ENCODE measurements at regions of chr10 and their contacts with region 1.

Region 1: DNA sequence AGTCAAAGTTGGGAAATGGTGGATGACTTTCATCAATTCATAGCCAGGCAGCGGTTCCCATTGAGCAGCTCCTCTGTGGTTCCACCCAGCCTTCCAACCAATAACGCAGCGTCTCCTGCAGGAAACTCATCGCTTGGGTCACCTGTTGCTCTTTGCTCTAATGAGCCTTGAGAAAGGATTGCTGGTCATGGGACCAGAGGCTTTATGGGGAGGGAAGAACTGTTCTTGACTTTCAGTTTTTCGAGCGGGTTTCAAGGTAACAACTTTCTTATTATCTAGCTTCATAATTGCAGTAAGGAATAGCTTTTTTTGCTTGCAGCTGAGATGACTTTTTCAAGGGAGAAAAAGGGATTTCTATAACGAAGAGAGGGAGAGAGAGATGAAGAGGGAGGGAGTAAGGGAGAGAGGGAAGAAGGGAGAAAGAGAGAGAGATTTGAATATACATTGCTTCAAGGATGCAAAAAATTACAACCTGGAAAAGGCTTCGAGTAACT is 405 bp upstream of the ENTPD1 start:
- DNase-seq: peak; percentile 90
- ATAC-seq: peak; percentile 48
- H3K4me3 ChIP-seq: peak overlapping the region; percentile 94
- H3K27ac ChIP-seq: peak overlapping the region; percentile 96
- H3K4me1 ChIP-seq: peaks cover 15% of the 10 kb centered on the region; the same call in 1 of the 2 replicates
- H3K27me3 ChIP-seq: no peaks in the 10 kb centered on the region
- CTCF ChIP-seq: no peak; a peak in 1 of 6 replicates
- EP300 ChIP-seq: peak in 1 of 2 experiments; percentile 56; a peak in 1 of 4 replicates
- POLR2A ChIP-seq: peak; percentile 23; the same call in 1 of the 2 replicates
- RAD21 ChIP-seq: no peak

Region 2: DNA sequence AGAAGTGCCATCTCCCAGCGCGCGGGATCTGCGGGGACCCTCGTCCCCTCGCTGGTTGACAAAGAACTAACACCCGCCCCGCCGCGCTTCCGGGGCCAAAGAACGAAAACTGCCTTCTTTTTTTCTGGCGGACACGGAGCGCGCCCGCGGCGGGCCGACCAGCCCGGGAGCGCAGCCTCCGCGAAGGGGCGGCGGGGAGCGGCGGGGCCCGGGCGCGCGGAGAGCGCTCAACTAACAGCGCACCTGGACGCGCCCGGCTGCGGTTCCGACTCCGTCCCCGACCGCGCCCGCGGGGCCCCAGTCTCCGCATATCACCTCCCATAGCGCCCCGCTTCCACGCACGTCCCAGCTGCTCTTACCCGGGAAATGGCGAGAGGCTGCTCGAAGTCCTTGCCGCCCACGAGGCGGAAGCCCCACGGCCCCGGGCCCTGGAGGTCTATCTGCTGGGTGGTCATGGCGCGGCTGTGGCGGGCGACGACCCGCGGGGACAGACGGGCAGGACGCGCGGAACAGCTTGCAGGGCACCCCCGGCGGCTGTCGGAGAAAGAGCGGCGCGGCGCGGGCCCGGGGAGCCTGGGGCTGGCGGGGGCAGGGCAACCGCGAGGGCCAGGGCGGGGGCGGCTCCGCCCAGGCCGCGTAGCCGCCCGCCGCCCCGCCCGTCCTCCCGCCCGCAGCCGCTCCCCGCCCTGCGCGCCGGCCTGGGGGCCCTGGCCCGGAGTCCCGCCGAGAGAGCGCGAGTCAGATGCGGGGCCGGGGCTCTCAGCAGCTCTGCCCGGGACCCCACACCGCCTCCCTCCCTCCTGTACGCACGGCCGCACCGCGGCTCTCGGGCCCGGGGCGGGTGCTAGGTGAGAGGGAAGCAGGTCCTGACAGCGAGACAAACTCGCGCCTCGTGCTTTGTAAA is 464.8 kb before region 1 on chr10 and contains the start of gene PDLIM1:
- CTCF ChIA-PET with region 1: no interaction called
- POLR2A ChIA-PET with region 1: interaction called, 3 read pairs
- RAD21 ChIA-PET with region 1: no interaction called
- SMC1A ChIA-PET with region 1: no interaction called
- in situ Hi-C with region 1: loop called (anchors 10 kb)
- intact Hi-C with region 1: loop called (anchors 10 kb)
- DNase-seq: no peak
- ATAC-seq: peak; percentile 55
- H3K4me3 ChIP-seq: peak within 1 kb of the TSS; percentile 97
- H3K27ac ChIP-seq: peak within 1 kb of the TSS; percentile 98
- H3K4me1 ChIP-seq: peaks cover 47% of the 10 kb centered on the region
- H3K27me3 ChIP-seq: no peaks in the 10 kb centered on the region
- CTCF ChIP-seq: peak; percentile 21 to 30 (median 27); a peak in 5 of 6 replicates
- EP300 ChIP-seq: no peak
- POLR2A ChIP-seq: peak; percentile 96
- RAD21 ChIP-seq: no peak
- polyA plus RNA-seq, gene PDLIM1: 133 to 338 TPM

Region 3: DNA sequence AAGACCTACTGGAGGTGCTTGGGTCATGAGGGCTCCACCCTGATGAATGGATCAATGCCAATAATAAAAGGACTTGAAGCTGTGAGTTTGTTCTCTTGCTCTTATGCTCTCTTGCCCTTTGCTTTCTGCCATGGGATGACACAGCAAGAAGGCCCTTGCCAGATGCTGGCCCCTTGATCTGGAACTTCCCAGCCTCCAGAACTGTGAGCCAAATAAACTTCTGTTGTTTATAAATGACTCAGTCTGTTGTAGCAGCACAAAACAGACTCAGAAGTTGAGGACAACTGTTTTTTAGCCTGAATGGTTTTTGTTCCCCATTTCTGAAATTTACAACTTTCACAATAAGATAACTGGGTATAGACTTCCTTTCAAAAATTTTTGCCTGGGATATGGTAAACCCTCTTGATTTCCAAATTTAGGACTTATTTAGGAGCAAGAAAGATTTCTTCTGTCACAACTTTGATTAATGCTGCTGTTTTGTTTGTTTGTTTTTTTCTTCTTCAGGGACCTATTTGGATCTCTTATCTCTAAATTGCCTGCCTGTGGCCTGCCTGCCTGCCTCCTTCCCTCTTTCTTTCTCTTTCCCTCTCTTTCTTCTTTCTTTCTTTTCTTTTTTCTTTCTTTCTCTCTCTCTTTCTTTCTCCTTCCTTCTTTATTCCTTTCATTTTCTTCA is 12.5 kb after region 1 on chr10:
- CTCF ChIA-PET with region 1: no interaction called
- POLR2A ChIA-PET with region 1: interaction called, 7 read pairs
- RAD21 ChIA-PET with region 1: interaction called, 18 read pairs
- SMC1A ChIA-PET with region 1: interaction called, 4 read pairs
- in situ Hi-C with region 1: no loop called
- intact Hi-C with region 1: no loop called
- DNase-seq: no peak
- ATAC-seq: peak; percentile 87
- H3K4me3 ChIP-seq: peak overlapping the region; percentile 19; the same call in 1 of the 2 replicates
- H3K27ac ChIP-seq: peak overlapping the region; percentile 94
- H3K4me1 ChIP-seq: peaks cover 34% of the 10 kb centered on the region
- H3K27me3 ChIP-seq: no peaks in the 10 kb centered on the region
- CTCF ChIP-seq: no peak
- EP300 ChIP-seq: peak; percentile 33 to 73; a peak in 3 of 4 replicates
- POLR2A ChIP-seq: no peak
- RAD21 ChIP-seq: peak; percentile 28; the same call in 1 of the 2 replicates

Region 4: DNA sequence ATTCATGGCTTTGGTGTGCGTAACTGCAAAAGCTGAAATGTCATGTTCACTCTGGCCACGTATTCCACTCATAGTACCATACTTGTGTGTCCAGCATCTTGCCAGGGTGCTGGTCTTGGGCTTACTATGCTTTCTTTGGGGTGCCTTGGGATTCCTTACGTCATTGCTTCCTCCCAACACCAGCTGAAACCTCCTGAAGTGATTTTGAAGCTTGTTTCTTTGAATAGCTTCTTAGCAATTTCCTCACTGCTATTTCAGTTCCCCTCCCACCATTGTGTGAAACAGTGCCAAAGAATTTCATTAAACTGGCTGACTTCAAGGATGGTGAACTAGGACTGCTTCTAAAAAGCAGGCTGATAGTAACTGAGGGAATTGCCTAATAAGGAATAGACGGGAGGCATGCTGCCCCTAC is 37.3 kb after region 1 on chr10:
- CTCF ChIA-PET with region 1: interaction called, 23 read pairs
- POLR2A ChIA-PET with region 1: interaction called, 265 read pairs
- RAD21 ChIA-PET with region 1: interaction called, 270 read pairs
- SMC1A ChIA-PET with region 1: interaction called, 547 read pairs
- in situ Hi-C with region 1: no loop called
- intact Hi-C with region 1: loop called (anchors 1 kb)
- DNase-seq: peak; percentile 77
- ATAC-seq: peak; percentile 31
- H3K4me3 ChIP-seq: peak overlapping the region; percentile 18; the same call in 1 of the 2 replicates
- H3K27ac ChIP-seq: peak overlapping the region; percentile 93
- H3K4me1 ChIP-seq: peaks cover 64% of the 10 kb centered on the region
- H3K27me3 ChIP-seq: no peaks in the 10 kb centered on the region
- CTCF ChIP-seq: no peak
- EP300 ChIP-seq: peak; percentile 54; a peak in 1 of 4 replicates
- POLR2A ChIP-seq: no peak
- RAD21 ChIP-seq: 0 out of 2 replicates have a peak, but pooled peaks have one; percentile 4

Region 5: DNA sequence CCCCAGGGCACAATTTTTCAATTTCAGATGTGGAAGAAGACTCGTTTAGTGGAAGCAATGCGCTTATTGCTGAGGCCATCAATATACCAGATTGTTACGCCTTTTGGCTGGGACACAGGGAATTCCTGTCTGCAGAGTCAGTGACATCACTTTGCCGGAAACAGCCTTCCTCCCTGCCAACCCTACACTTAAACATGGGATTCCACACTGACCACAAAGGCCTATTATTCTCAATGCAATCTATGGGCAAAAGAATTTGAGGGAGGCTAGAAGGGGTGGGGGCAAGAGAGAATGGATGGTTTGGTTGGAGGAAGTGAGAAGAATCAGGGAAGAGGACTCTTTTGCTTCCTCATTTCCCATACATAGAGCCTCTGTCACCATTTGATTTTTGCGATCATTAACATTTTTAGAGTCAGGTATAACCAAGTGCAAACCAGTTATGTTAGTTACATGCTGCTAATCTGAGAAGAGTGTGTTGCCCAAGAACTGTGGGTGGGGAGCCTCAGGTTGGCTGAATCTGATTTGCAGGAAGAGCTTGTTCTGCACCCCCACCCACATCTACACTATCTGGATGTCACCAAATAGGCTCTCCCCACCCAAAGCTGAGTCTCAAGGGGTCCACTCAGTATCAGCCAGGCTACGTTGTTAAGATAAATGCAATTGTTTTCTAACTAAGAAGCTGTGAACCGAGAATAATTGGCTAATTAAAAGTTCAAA is 58.6 kb after region 1 on chr10:
- CTCF ChIA-PET with region 1: interaction called, 8 read pairs
- POLR2A ChIA-PET with region 1: interaction called, 105 read pairs
- RAD21 ChIA-PET with region 1: interaction called, 74 read pairs
- SMC1A ChIA-PET with region 1: interaction called, 102 read pairs
- in situ Hi-C with region 1: no loop called
- intact Hi-C with region 1: no loop called
- DNase-seq: no peak
- ATAC-seq: peak; percentile 6; the same call in 1 of the 3 replicates
- H3K4me3 ChIP-seq: no peak overlapping the region
- H3K27ac ChIP-seq: peak overlapping the region; percentile 26; the same call in 1 of the 2 replicates
- H3K4me1 ChIP-seq: peaks cover 44% of the 10 kb centered on the region
- H3K27me3 ChIP-seq: no peaks in the 10 kb centered on the region
- CTCF ChIP-seq: no peak
- EP300 ChIP-seq: no peak
- POLR2A ChIP-seq: peak; percentile 30; the same call in 1 of the 2 replicates
- RAD21 ChIP-seq: no peak

Region 6: DNA sequence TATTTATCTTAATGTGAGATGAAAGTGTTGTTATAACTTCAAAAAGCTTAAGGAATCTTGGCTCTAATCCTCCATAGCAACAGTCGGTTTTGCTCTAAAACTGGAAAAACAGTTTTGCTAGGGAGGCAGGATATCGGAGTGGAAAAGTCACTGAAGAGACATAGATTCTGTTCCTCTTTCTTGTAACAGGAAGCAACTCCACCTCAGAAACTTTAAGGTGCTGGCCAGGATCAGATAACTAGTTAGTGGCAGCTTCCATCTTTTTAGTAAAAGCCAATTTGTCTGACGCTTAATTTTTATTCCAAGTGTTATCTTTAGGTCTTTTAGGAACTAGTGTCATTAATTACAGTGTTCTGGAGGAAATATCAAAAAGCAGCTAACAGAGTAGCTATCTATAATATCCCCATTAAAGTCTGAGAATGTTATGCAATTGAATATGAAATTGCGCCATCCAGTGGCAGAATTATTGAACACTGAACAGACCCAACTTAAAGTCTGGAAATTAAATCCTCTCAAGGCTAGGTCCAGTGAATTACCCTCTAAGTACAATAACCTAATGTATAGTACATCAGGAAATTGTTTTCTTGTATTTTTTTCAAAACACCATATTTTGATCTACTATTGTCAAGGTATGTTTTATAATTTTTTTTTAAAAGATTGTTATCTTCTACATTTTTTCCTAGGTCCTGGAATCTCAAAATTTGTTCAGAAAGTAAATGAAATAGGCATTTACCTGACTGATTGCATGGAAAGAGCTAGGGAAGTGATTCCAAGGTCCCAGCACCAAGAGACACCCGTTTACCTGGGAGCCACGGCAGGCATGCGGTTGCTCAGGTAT is 86.3 kb after region 1 on chr10:
- CTCF ChIA-PET with region 1: interaction called, 187 read pairs
- POLR2A ChIA-PET with region 1: interaction called, 313 read pairs
- RAD21 ChIA-PET with region 1: interaction called, 374 read pairs
- SMC1A ChIA-PET with region 1: interaction called, 413 read pairs
- in situ Hi-C with region 1: loop called (anchors 10 kb)
- intact Hi-C with region 1: loop called (anchors 1 kb)
- DNase-seq: no peak
- ATAC-seq: peak; percentile 53
- H3K4me3 ChIP-seq: no peak overlapping the region
- H3K27ac ChIP-seq: peak overlapping the region; percentile 98
- H3K4me1 ChIP-seq: peaks cover 43% of the 10 kb centered on the region
- H3K27me3 ChIP-seq: no peaks in the 10 kb centered on the region
- CTCF ChIP-seq: peak; percentile 37 to 71 (median 58); a peak in 4 of 6 replicates
- EP300 ChIP-seq: peak in 1 of 2 experiments; percentile 45; a peak in 1 of 4 replicates
- POLR2A ChIP-seq: no peak
- RAD21 ChIP-seq: peak; percentile 77